ENCODE measurements at regions of chr6 and their contacts with region 1.

Region 1: DNA sequence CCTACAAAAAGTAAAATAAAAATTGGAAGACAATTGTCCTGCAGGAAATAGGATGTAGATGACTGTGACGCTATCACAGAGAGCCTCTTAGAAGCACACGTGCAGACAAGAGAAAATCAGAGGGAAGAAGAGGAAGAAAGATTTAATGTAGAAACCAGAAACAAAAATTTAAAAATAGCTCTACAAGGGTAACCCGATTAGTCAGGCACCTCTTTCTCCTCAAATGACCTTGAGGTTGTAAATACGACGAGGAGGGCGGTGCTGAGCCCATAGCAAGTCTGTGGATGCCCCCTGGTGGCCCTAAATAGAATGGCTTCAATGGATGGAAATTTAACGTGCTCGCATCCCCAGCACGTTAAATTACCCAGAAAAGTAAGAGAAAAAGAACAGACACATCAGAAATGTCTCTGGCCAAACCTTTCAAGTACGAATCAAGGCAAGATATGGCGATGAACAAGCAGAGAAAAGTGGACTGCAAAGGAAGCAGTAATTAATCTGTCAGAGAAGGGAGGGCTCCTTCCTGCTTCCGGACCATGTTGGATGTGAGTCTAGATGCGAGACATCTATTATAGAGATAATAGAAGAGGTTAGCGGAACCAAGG is 4.2 kb upstream of the PRPH2 start:
- DNase-seq: peak; percentile 43 to 91 (median 77)
- ATAC-seq: peak; percentile 93 to 98
- H3K4me3 Mint-ChIP-seq: peak overlapping the region; percentile 75 to 98 (median 90)
- H3K27ac Mint-ChIP-seq: peak overlapping the region; percentile 93 to 99 (median 98)
- H3K4me1 Mint-ChIP-seq: peaks cover 11 to 25% (median 19%) of the 10 kb centered on the region in 4 donors
- H3K27me3 Mint-ChIP-seq: no peaks in the 10 kb centered on the region

Region 2: GRCh38 chr6:42378125-42378524 is 348.5 kb before region 1 on chr6:
- POLR2A ChIA-PET with region 1: no interaction called
- DNase-seq: peak in 4 of 10 donors; percentile 31 to 54 (median 48)
- ATAC-seq: peak; percentile 78 to 86
- H3K4me3 Mint-ChIP-seq: peak overlapping the region; percentile 50 to 77 (median 66)
- H3K27ac Mint-ChIP-seq: peak overlapping the region; percentile 88 to 97 (median 94)
- H3K4me1 Mint-ChIP-seq: peaks cover 43 to 83% (median 78%) of the 10 kb centered on the region in 4 donors
- H3K27me3 Mint-ChIP-seq: no peaks in the 10 kb centered on the region

Region 3: DNA sequence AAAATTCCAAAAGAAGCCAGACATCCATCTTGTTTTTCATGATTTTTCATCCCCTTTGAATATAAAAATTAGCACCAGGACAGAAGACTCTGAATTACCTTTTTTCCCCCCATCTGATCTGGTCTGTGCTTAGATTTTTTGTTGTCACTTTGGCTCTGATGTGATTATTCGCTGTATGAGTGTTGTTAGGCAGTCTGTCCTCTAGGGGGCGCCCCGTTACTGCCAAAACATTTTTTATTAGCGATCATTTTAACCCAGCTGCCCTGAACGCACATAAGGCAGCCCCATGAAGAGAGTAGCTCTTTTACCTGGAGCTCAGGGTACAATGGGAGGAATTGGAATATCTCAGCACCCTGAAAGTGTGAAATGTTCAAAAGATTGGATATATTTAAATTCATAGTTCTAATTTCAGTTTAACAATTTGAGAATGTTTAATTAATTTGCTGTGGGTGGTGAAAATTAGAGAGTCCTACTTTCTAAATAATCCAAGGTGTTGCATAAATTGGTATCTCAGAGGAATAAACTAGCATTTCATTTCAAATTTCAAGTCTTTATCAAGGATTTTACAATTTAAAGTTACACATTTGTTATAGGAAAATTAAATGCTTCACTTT is 64.9 kb before region 1 on chr6:
- POLR2A ChIA-PET with region 1: interaction called, 27 read pairs
- DNase-seq: peak; percentile 69 to 93 (median 83)
- ATAC-seq: peak; percentile 93 to 96
- H3K4me3 Mint-ChIP-seq: no peak overlapping the region
- H3K27ac Mint-ChIP-seq: peak overlapping the region in 8 of 10 donors; percentile 2 to 62 (median 32)
- H3K4me1 Mint-ChIP-seq: peaks cover 0 to 4% (median 0%) of the 10 kb centered on the region in 4 donors
- H3K27me3 Mint-ChIP-seq: no peaks in the 10 kb centered on the region

Region 4: GRCh38 chr6:42692137-42692911 is 34.3 kb before region 1 on chr6:
- POLR2A ChIA-PET with region 1: interaction called, 28 read pairs
- DNase-seq: no peak
- ATAC-seq: peak in 1 of 2 donors; percentile 11
- H3K4me3 Mint-ChIP-seq: peak overlapping the region in 3 of 10 donors; percentile 4 to 61 (median 44)
- H3K27ac Mint-ChIP-seq: peak overlapping the region; percentile 48 to 96 (median 90)
- H3K4me1 Mint-ChIP-seq: peaks cover 26 to 55% (median 47%) of the 10 kb centered on the region in 4 donors
- H3K27me3 Mint-ChIP-seq: no peaks in the 10 kb centered on the region

Region 5: DNA sequence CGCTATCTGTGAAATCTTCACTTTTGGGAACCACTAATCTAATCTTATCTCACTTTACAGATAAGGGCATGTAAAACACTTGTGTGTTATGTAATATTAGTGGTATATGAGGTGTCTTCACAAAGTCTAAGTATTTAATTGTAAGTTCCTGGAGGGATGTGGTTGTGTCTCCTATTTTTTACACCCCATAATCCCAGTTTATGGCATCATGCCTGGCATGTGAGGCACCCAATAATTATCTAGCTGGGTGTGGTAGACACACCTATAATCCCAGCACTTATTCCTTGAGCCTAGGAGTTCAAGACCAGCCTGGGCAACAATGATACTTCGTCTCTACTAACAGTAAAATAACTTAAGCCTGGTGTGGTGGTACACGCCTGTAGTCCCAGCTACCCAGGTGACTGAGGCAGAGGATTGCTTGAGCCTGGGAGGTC is 35.9 kb after region 1 on chr6:
- POLR2A ChIA-PET with region 1: no interaction called
- DNase-seq: no peak
- ATAC-seq: no peak
- H3K4me3 Mint-ChIP-seq: no peak overlapping the region
- H3K27ac Mint-ChIP-seq: no peak overlapping the region
- H3K4me1 Mint-ChIP-seq: peaks cover 10 to 38% (median 35%) of the 10 kb centered on the region in 4 donors
- H3K27me3 Mint-ChIP-seq: no peaks in the 10 kb centered on the region

Region 6: GRCh38 chr6:42879372-42880239 is 153.0 kb after region 1 on chr6 and contains the start of gene RPL7L1:
- POLR2A ChIA-PET with region 1: interaction called, 36 read pairs
- DNase-seq: peak; percentile 67 to 93 (median 83)
- ATAC-seq: peak; percentile 92 to 93
- H3K4me3 Mint-ChIP-seq: peak within 1 kb of the TSS; percentile 92 to 100 (median 97)
- H3K27ac Mint-ChIP-seq: peak within 1 kb of the TSS; percentile 98 to 100 (median 100)
- H3K4me1 Mint-ChIP-seq: peaks cover 9 to 37% (median 35%) of the 10 kb centered on the region in 4 donors
- H3K27me3 Mint-ChIP-seq: no peaks in the 10 kb centered on the region
- polyA plus RNA-seq, gene RPL7L1: 65.3 to 87.9 (median 67.4) TPM

Region 7: GRCh38 chr6:42890311-42891198 is 164.0 kb after region 1 on chr6:
- POLR2A ChIA-PET with region 1: interaction called, 11 read pairs
- DNase-seq: peak; percentile 69 to 94 (median 85)
- ATAC-seq: peak; percentile 87 to 94
- H3K4me3 Mint-ChIP-seq: peak overlapping the region; percentile 92 to 99 (median 98)
- H3K27ac Mint-ChIP-seq: peak overlapping the region; percentile 92 to 98 (median 96)
- H3K4me1 Mint-ChIP-seq: peaks cover 7 to 37% (median 19%) of the 10 kb centered on the region in 4 donors
- H3K27me3 Mint-ChIP-seq: no peaks in the 10 kb centered on the region

Measured in naive thymus-derived CD8-positive, alpha-beta T cell (primary cell).